Activated CD8-positive, alpha-beta T cell treated with anti-CD3 and anti-CD28 coated beads for 36 hours (primary cell): ENCODE measurements at regions of chr11 and their contacts with region 1.

Region 1: DNA sequence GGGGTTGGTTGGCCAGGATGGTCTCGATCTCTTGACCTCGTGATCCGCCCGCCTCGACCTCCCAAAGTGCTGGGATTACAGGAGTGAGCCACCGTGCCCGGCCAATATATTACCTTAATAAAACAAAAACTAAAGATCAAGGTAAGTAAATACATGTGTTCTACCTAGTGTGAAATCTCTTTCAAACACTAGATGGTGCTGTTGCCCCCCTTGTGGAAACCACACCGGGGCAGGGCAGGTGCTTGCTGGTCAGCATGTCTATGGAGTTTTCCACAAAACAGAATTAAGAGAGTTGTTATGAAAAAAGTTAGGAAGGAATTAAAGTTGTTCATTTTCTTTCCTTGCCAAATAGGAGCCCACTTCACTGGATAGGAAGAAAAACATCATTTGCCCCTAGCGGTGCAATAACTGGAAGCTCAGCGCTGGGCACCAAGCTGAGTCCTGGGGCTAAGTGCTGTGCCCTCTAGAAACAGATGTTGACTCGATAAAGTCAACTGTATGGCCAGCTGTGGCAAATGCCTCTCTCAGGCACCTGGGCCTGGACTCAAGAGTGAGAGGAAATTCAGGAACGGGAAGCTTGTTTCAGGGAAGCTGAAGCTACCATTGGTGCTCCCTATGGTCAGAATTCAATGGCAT is 6.3 kb upstream of the KCNJ5 start:
- DNase-seq: peak; percentile 67
- ATAC-seq: peak; percentile 84
- H3K4me3 Mint-ChIP-seq: no peak overlapping the region
- H3K27ac Mint-ChIP-seq: no peak overlapping the region
- H3K4me1 Mint-ChIP-seq: peaks cover 4% of the 10 kb centered on the region
- H3K27me3 Mint-ChIP-seq: peaks cover 46% of the 10 kb centered on the region
- CTCF ChIP-seq: peak; percentile 92

Region 2: GRCh38 chr11:128802358-128802981 is 82.4 kb before region 1 on chr11:
- CTCF ChIA-PET with region 1: no interaction called
- POLR2A ChIA-PET with region 1: no interaction called
- intact Hi-C with region 1: no loop called
- DNase-seq: no peak
- ATAC-seq: no peak
- H3K4me3 Mint-ChIP-seq: no peak overlapping the region
- H3K27ac Mint-ChIP-seq: no peak overlapping the region
- H3K4me1 Mint-ChIP-seq: peaks cover 16% of the 10 kb centered on the region
- H3K27me3 Mint-ChIP-seq: no peaks in the 10 kb centered on the region
- CTCF ChIP-seq: no peak

Region 3: DNA sequence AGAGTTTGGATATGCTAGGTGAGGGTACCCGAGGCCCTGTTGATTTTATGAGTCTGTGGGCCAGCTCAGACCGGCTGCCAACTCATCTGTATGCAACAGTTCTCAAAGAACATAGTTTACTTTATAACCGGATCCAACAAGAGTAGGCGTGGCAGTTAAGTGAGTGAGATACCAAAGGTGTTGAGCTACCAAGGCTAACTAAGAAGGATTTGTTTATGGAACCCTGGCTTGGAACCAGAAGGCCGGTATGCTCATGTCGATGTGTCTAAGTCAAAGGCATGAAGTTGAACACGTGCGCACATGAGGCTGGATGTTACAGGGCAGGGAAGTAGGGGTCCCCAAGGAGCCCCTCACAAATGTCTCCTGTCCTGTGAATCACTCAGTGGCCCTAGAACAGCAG is 17.5 kb before region 1 on chr11 and contains the start of gene KCNJ1:
- CTCF ChIA-PET with region 1: interaction called, 11 read pairs
- POLR2A ChIA-PET with region 1: no interaction called
- intact Hi-C with region 1: no loop called
- DNase-seq: peak; percentile 56
- ATAC-seq: peak; percentile 31
- H3K4me3 Mint-ChIP-seq: no peak within 1 kb of the TSS
- H3K27ac Mint-ChIP-seq: no peak within 1 kb of the TSS
- H3K4me1 Mint-ChIP-seq: no peaks in the 10 kb centered on the region
- H3K27me3 Mint-ChIP-seq: peaks cover 2% of the 10 kb centered on the region
- CTCF ChIP-seq: no peak
- total RNA-seq, gene KCNJ1: not detected

Region 4: DNA sequence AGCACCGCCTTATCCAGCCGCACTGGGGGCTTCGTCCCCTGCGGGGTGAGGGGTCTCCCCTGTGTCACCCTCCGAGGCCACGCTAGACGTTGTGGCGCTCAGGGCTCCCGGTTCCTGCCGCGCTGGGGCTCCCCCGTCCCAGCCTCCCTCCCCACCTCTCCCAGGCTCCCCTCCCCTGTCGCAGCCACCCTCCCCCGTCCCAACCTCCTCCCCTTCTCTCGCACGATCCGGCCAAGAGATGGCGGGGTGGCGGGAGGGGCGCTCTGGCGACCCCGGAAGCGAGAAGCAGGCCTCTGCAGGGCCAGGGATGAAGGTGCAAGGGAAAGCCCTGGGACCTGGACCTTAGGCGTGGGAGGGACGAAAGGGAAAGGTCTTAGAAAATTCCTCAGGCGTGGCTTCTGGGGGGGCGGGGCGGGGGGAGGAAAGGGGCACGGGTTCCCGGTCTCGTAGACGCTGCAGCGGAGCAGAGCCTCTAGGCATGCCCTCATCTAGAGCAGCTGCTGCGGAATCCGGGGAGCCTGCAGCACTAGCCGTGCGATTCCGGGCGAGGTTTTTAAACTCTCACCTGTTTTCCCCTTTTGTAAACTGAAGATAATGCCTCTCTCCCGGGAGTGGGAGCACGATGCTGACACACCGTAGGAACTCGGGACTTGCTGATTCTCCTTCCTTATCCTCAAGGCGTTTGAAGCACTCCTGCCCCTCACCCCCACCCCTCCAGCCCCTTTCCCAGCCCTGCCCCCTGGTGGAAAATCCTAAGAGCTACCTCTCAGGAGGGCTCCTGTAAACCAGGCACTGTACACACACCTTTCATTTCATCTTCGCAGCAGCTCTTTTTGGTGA is 20.7 kb after region 1 on chr11:
- CTCF ChIA-PET with region 1: interaction called, 123 read pairs
- POLR2A ChIA-PET with region 1: no interaction called
- intact Hi-C with region 1: no loop called
- DNase-seq: peak; percentile 48
- ATAC-seq: peak; percentile 75
- H3K4me3 Mint-ChIP-seq: peak overlapping the region; percentile 68
- H3K27ac Mint-ChIP-seq: no peak overlapping the region
- H3K4me1 Mint-ChIP-seq: peaks cover 12% of the 10 kb centered on the region
- H3K27me3 Mint-ChIP-seq: peaks cover 27% of the 10 kb centered on the region
- CTCF ChIP-seq: peak; percentile 44

Region 5: GRCh38 chr11:128926437-128927109 is 41.8 kb after region 1 on chr11:
- CTCF ChIA-PET with region 1: interaction called, 15 read pairs
- POLR2A ChIA-PET with region 1: no interaction called
- intact Hi-C with region 1: no loop called
- DNase-seq: no peak
- ATAC-seq: no peak
- H3K4me3 Mint-ChIP-seq: no peak overlapping the region
- H3K27ac Mint-ChIP-seq: no peak overlapping the region
- H3K4me1 Mint-ChIP-seq: peaks cover 11% of the 10 kb centered on the region
- H3K27me3 Mint-ChIP-seq: peaks cover 2% of the 10 kb centered on the region
- CTCF ChIP-seq: no peak

Region 6: GRCh38 chr11:128948589-128948988 is 63.8 kb after region 1 on chr11:
- CTCF ChIA-PET with region 1: interaction called, 283 read pairs
- POLR2A ChIA-PET with region 1: interaction called, 3 read pairs
- intact Hi-C with region 1: no loop called
- DNase-seq: peak; percentile 30
- ATAC-seq: no peak
- H3K4me3 Mint-ChIP-seq: no peak overlapping the region
- H3K27ac Mint-ChIP-seq: no peak overlapping the region
- H3K4me1 Mint-ChIP-seq: no peaks in the 10 kb centered on the region
- H3K27me3 Mint-ChIP-seq: peaks cover 2% of the 10 kb centered on the region
- CTCF ChIP-seq: no peak